ENCODE measurements at regions of chr3 and their contacts with region 1.

Region 1: GRCh38 chr3:170802164-170803151 is 67.5 kb downstream of the RPL22L1 start:
- DNase-seq: peak; percentile 99
- ATAC-seq: peak; percentile 88
- H3K4me3 ChIP-seq: no peak overlapping the region
- H3K27ac ChIP-seq: peak overlapping the region; percentile 97
- H3K4me1 ChIP-seq: peaks cover 20% of the 10 kb centered on the region
- H3K27me3 ChIP-seq: no peaks in the 10 kb centered on the region
- CTCF ChIP-seq: no peak
- POLR2A ChIP-seq: no peak
- RAD21 ChIP-seq: peak; percentile 20

Region 2: DNA sequence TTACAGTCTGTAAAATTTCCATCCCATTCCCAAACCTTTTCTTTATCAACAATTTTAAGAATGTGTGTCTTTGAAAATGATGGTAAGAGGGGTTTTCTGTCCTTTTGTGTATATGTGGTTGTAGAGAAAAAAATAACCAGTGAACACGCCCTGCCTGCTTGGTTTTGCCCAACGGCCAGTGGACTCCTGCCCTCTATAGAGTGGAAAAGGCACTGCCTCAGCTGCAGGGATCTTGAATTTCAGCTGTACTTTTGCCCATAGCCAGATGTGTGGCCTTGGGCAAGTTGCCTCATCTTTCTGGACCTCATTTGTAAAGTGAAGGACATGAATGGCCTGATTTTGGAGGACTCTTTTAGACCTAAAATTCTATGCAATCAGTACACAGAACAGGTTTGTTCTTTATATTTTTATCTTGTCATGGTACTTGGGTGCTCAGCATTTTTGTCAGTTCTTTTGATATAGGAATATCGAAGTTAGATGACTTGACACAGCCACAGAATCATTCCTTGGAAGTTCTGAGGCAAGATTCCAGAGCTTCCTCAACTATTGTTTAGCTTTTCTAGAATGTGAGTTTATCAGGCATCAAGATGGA is 302.8 kb before region 1 on chr3:
- CTCF ChIA-PET with region 1: interaction called, 3 read pairs
- POLR2A ChIA-PET with region 1: no interaction called
- dilution Hi-C with region 1: no loop called
- in situ Hi-C with region 1: no loop called
- intact Hi-C with region 1: loop called (anchors 2 kb)
- DNase-seq: peak; percentile 57
- ATAC-seq: peak; percentile 60; the same call in 1 of the 2 replicates
- H3K4me3 ChIP-seq: no peak overlapping the region
- H3K27ac ChIP-seq: no peak overlapping the region
- H3K4me1 ChIP-seq: no peaks in the 10 kb centered on the region; the same call in 1 of the 2 replicates
- H3K27me3 ChIP-seq: no peaks in the 10 kb centered on the region
- CTCF ChIP-seq: peak; percentile 57
- POLR2A ChIP-seq: no peak
- RAD21 ChIP-seq: peak; percentile 56

Region 3: GRCh38 chr3:170622369-170623159 is 179.9 kb before region 1 on chr3:
- CTCF ChIA-PET with region 1: interaction called, 3 read pairs
- POLR2A ChIA-PET with region 1: no interaction called
- dilution Hi-C with region 1: no loop called
- in situ Hi-C with region 1: loop called (anchors 10 kb)
- intact Hi-C with region 1: loop called (anchors 5 kb)
- DNase-seq: peak; percentile 99
- ATAC-seq: peak; percentile 99
- H3K4me3 ChIP-seq: no peak overlapping the region
- H3K27ac ChIP-seq: peak overlapping the region; percentile 71
- H3K4me1 ChIP-seq: peaks cover 10% of the 10 kb centered on the region; the same call in 1 of the 2 replicates
- H3K27me3 ChIP-seq: no peaks in the 10 kb centered on the region
- CTCF ChIP-seq: 0 out of 2 replicates have a peak, but pooled peaks have one; percentile 15
- POLR2A ChIP-seq: no peak
- RAD21 ChIP-seq: no peak; the same call in 1 of the 2 replicates

Region 4: DNA sequence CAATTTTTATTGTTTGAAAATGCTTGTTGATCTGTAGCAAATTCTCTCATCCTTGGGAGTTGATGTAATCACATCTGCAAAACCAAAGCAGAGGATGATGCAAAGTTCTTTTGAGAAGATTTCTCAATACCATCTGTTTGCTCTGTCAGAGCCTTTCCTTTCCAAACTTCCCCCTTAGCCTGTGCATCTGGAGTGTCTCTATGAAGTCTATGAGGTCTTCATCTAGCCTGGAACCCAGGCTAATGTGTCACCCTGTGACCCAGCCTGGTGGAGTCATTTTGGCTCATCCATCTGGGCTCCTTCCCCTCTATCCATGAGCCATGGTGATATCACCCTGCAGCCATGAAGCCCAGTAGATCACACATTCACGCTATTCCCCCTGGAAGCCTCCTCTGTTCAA is 93.4 kb before region 1 on chr3:
- CTCF ChIA-PET with region 1: interaction called, 5 read pairs
- POLR2A ChIA-PET with region 1: no interaction called
- dilution Hi-C with region 1: no loop called
- in situ Hi-C with region 1: loop called (anchors 10 kb)
- intact Hi-C with region 1: loop called (anchors 1 kb)
- DNase-seq: peak; percentile 96
- ATAC-seq: peak; percentile 78
- H3K4me3 ChIP-seq: no peak overlapping the region
- H3K27ac ChIP-seq: peak overlapping the region; percentile 85; the same call in 1 of the 2 replicates
- H3K4me1 ChIP-seq: peaks cover 17% of the 10 kb centered on the region
- H3K27me3 ChIP-seq: no peaks in the 10 kb centered on the region
- CTCF ChIP-seq: no peak
- POLR2A ChIP-seq: no peak
- RAD21 ChIP-seq: no peak

Region 5: GRCh38 chr3:170726976-170727661 is 75.3 kb before region 1 on chr3:
- CTCF ChIA-PET with region 1: interaction called, 4 read pairs
- POLR2A ChIA-PET with region 1: no interaction called
- dilution Hi-C with region 1: no loop called
- in situ Hi-C with region 1: no loop called
- intact Hi-C with region 1: loop called (anchors 1 kb)
- DNase-seq: peak; percentile 94
- ATAC-seq: peak; percentile 59
- H3K4me3 ChIP-seq: no peak overlapping the region
- H3K27ac ChIP-seq: peak overlapping the region; percentile 99
- H3K4me1 ChIP-seq: peaks cover 26% of the 10 kb centered on the region
- H3K27me3 ChIP-seq: no peaks in the 10 kb centered on the region
- CTCF ChIP-seq: no peak
- POLR2A ChIP-seq: no peak
- RAD21 ChIP-seq: peak; percentile 17; the same call in 1 of the 2 replicates

Region 6: DNA sequence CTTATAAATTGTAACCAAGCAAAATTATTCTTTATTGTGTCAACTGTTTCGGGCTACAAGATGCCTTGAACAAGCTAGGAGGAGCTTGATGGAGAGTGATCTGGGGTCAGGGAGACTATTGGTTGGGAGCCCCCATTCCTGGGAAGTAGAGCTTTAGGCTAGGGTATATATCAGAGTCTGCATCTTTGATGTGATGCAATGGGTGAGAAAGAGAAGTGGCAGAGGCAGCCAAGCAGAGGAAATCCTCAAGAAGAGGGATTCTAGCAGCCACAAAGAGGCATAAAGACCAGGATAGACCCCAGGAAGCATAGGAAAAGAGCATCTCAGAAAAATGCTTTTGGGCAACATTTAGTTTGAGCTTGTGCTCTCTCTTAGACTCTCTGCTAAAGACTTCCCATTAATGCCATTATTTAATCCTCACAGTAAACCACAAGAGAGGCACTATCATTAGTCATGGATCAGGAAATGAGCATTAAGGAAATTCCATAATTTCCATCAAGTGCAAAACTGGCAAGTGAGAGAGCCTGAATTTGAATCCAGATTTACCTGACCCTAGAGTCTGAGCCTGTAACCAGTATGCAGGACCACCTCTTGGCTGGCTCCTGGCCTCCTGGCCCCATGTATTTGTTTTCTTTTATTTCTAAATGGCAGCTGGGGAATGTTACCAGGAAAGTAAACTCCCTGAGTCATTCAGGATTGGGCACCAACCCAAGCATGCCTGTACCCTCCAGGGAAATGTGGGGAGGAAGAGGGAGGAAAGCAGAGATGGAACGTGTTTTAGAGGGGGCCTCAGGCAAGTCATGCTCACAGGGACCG is 51.2 kb before region 1 on chr3:
- CTCF ChIA-PET with region 1: interaction called, 3 read pairs
- POLR2A ChIA-PET with region 1: interaction called, 4 read pairs
- dilution Hi-C with region 1: no loop called
- in situ Hi-C with region 1: no loop called
- intact Hi-C with region 1: loop called (anchors 1 kb)
- DNase-seq: peak; percentile 82
- ATAC-seq: peak; percentile 57
- H3K4me3 ChIP-seq: no peak overlapping the region
- H3K27ac ChIP-seq: peak overlapping the region; percentile 97
- H3K4me1 ChIP-seq: peaks cover 28% of the 10 kb centered on the region
- H3K27me3 ChIP-seq: no peaks in the 10 kb centered on the region
- CTCF ChIP-seq: no peak
- POLR2A ChIP-seq: no peak
- RAD21 ChIP-seq: no peak

Region 7: GRCh38 chr3:170768334-170768801 is 34.1 kb before region 1 on chr3:
- CTCF ChIA-PET with region 1: no interaction called
- POLR2A ChIA-PET with region 1: no interaction called
- dilution Hi-C with region 1: no loop called
- in situ Hi-C with region 1: no loop called
- intact Hi-C with region 1: loop called (anchors 5 kb)
- DNase-seq: peak; percentile 71
- ATAC-seq: peak; percentile 82
- H3K4me3 ChIP-seq: no peak overlapping the region
- H3K27ac ChIP-seq: peak overlapping the region; percentile 38; the same call in 1 of the 2 replicates
- H3K4me1 ChIP-seq: peaks cover 26% of the 10 kb centered on the region
- H3K27me3 ChIP-seq: no peaks in the 10 kb centered on the region
- CTCF ChIP-seq: no peak
- POLR2A ChIP-seq: no peak
- RAD21 ChIP-seq: no peak

Region 8: GRCh38 chr3:171459942-171460724 is 657.7 kb after region 1 on chr3 and contains the start of gene TNIK:
- CTCF ChIA-PET with region 1: no interaction called
- POLR2A ChIA-PET with region 1: no interaction called
- dilution Hi-C with region 1: no loop called
- in situ Hi-C with region 1: no loop called
- intact Hi-C with region 1: no loop called
- DNase-seq: peak; percentile 89
- ATAC-seq: peak; percentile 94
- H3K4me3 ChIP-seq: peak within 1 kb of the TSS; percentile 86
- H3K27ac ChIP-seq: peak within 1 kb of the TSS; percentile 62
- H3K4me1 ChIP-seq: peaks cover 3% of the 10 kb centered on the region
- H3K27me3 ChIP-seq: no peaks in the 10 kb centered on the region
- CTCF ChIP-seq: 0 out of 2 replicates have a peak, but pooled peaks have one; percentile 10
- POLR2A ChIP-seq: no peak; the same call in 1 of the 2 replicates
- RAD21 ChIP-seq: no peak; the same call in 1 of the 2 replicates
- total RNA-seq, gene TNIK: 6.3 and 8.3 TPM in 2 replicates